HCT116 (cell line): ENCODE measurements at regions of chr2 and their contacts with region 1.

Region 1: DNA sequence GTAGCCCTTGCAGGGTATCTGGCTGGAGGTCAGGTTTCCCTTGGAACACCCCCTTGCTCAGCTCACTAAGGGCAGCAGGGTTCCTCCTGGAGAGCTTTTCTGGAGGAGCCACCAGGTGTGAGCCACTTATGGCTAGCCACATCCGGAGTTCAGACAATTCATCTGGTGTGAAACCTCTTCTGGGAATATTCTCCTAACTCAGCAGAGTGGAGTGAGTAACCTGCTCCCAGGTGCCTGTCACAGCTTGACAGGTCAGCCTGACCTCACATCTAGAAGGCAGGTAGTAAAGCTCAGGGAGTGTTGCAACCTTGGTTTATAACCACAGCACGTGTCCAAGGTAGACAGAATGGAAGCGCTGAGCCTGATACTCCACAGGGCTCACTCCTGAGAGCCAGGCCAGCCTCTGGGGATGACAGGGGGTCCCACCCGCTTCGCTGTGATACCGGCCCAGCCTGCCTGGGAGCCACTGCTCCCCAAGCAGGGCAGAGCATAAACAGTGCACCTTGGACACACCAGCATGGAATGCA is 62.6 kb upstream of the TGFA start:
- DNase-seq: no peak
- ATAC-seq: no peak
- H3K4me3 ChIP-seq: no peak overlapping the region
- H3K27ac ChIP-seq: no peak overlapping the region
- H3K4me1 ChIP-seq: peaks cover 0 to 2% of the 10 kb centered on the region in 2 experiments; a peak in 1 of 4 replicates
- H3K27me3 ChIP-seq: no peaks in the 10 kb centered on the region
- CTCF ChIP-seq: no peak
- POLR2A ChIP-seq: no peak
- RAD21 ChIP-seq: no peak

Region 2: DNA sequence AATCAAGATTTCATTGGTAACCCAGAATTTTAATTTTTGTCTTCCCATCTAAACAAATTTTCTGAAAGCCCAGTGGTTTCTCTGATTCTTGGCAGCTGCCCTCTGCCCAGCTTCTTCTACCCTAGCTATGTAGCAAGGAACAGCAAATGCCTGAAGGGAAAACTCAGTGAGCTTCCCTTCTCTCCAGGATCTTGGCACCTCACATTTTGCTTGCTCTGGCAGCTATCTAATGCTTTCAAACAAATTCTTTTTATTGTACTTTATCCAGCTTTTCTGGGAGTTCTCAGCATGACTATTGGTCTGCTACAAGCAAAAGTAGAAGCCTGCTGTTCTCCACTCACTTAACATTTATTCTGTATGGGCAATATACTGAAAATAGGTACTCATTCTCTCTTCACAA is 1210.9 kb before region 1 on chr2:
- CTCF ChIA-PET with region 1: no interaction called
- POLR2A ChIA-PET with region 1: no interaction called
- RAD21 ChIA-PET with region 1: no interaction called
- intact Hi-C with region 1: no loop called
- DNase-seq: no peak
- ATAC-seq: no peak
- H3K4me3 ChIP-seq: no peak overlapping the region
- H3K27ac ChIP-seq: no peak overlapping the region
- H3K4me1 ChIP-seq: no peaks in the 10 kb centered on the region
- H3K27me3 ChIP-seq: no peaks in the 10 kb centered on the region
- CTCF ChIP-seq: no peak
- POLR2A ChIP-seq: no peak
- RAD21 ChIP-seq: no peak

Region 3: DNA sequence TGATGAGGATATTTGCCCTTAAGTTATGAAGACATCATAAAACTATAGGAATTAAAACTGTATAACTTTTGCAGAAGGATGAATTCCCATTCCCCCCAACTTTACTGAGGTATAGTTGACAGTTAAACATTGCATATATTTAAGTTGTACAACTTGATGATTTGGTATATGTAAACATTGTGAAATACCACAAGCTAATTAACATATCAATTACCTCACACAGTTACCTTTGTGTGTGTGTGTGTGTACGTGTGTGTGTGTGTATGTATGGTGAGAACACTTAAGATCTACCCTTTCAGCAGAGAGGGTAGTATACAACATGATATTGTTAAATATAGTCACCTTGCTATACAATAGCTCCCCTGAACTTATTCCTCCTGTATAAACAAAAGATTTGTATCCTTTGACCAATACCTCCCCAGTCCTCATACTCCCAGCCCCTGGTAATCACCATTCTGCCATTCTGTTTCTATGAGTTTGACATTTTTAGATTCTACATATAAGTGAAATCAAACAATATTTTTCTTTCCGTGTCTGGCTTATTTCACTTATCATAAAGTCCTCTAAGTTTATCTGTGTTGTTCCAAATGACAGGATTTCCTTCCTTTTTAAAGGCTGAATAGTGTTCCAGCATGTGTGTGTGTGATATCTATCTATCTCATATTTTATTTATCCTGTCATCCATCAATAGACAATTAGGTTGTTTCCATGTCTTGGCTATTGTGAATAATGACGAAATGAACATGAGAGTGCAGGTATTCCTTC is 266.1 kb before region 1 on chr2:
- CTCF ChIA-PET with region 1: no interaction called
- POLR2A ChIA-PET with region 1: no interaction called
- RAD21 ChIA-PET with region 1: no interaction called
- intact Hi-C with region 1: no loop called
- DNase-seq: no peak
- ATAC-seq: no peak
- H3K4me3 ChIP-seq: no peak overlapping the region
- H3K27ac ChIP-seq: no peak overlapping the region
- H3K4me1 ChIP-seq: no peaks in the 10 kb centered on the region; a peak in 1 of 4 replicates
- H3K27me3 ChIP-seq: no peaks in the 10 kb centered on the region
- CTCF ChIP-seq: no peak
- POLR2A ChIP-seq: no peak
- RAD21 ChIP-seq: no peak

Region 4: DNA sequence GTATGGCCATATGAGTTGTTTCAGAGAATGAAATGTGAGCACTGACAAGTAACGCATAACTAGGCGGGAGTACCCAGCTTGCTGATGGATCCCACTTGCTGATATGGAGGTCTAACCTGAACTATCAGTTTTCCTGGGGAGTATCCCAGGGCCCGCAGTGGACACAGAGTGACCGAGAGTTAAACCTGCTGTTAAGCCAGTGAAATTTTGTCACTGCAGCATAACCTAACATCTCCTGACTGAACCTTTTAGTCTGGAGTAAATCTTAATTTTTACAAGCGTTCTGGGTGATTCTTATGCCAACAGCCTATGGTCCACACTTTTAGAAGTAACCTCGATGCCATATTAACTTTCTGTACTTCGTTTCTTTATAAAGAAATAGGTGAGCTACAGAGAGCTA is 117.0 kb before region 1 on chr2:
- CTCF ChIA-PET with region 1: interaction called, 5 read pairs
- POLR2A ChIA-PET with region 1: no interaction called
- RAD21 ChIA-PET with region 1: no interaction called
- intact Hi-C with region 1: loop called (anchors 1 kb)
- DNase-seq: no peak
- ATAC-seq: no peak
- H3K4me3 ChIP-seq: no peak overlapping the region
- H3K27ac ChIP-seq: no peak overlapping the region
- H3K4me1 ChIP-seq: peaks cover 10 to 20% of the 10 kb centered on the region in 2 experiments; a peak in 3 of 4 replicates
- H3K27me3 ChIP-seq: no peaks in the 10 kb centered on the region
- CTCF ChIP-seq: no peak
- POLR2A ChIP-seq: no peak
- RAD21 ChIP-seq: no peak

Region 5: DNA sequence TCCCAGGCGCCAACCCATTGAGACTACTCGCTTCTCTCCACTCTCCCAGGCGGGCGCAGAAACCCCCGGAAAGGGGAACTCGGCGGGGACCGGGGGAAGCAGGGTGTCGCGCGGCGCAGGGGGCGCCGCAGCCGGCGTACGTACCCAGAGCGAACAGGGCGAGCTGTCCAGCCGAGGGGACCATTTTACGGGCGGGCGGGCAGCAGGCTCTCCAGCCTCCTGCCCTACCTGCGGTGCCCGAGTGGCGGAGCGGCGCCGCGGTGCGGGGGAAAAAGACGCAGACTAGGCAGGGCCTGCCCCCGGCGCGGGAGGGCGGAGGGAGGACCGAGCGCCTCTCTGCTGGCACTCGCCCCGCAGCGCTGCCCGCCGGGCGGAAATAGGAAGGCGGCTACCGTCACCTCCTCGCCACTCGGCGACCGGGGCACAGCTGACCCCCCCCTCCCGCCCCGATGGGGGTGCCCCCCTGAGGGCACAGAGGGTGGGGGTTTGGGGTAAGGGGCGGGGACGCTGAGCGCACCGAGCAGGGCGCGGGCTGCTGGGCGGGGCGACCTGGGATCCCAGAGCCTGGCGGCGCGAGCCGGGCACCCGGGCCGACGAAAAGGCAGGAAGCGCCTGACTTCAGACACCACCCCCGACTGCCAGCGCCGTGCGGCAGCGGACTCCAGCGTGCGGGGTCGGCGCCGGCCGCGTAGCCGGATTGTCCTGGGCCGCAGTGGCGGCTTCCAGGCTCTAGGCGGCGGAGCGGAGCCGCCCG is 62.5 kb before region 1 on chr2 and contains the start of gene TGFA:
- CTCF ChIA-PET with region 1: interaction called, 6 read pairs
- POLR2A ChIA-PET with region 1: interaction called, 5 read pairs
- RAD21 ChIA-PET with region 1: interaction called, 3 read pairs
- intact Hi-C with region 1: loop called (anchors 1 kb)
- DNase-seq: peak; percentile 89
- ATAC-seq: peak; percentile 87
- H3K4me3 ChIP-seq: peak within 1 kb of the TSS; percentile 92 to 95
- H3K27ac ChIP-seq: peak within 1 kb of the TSS; percentile 94
- H3K4me1 ChIP-seq: peaks cover 18 to 25% of the 10 kb centered on the region in 2 experiments
- H3K27me3 ChIP-seq: no peaks in the 10 kb centered on the region
- CTCF ChIP-seq: peak; percentile 73 to 92 (median 76)
- POLR2A ChIP-seq: peak; percentile 5
- RAD21 ChIP-seq: peak; percentile 85
- total RNA-seq, gene TGFA: 50.1 TPM